ENCODE measurements at regions of chr4 and their contacts with region 1.

Region 1: DNA sequence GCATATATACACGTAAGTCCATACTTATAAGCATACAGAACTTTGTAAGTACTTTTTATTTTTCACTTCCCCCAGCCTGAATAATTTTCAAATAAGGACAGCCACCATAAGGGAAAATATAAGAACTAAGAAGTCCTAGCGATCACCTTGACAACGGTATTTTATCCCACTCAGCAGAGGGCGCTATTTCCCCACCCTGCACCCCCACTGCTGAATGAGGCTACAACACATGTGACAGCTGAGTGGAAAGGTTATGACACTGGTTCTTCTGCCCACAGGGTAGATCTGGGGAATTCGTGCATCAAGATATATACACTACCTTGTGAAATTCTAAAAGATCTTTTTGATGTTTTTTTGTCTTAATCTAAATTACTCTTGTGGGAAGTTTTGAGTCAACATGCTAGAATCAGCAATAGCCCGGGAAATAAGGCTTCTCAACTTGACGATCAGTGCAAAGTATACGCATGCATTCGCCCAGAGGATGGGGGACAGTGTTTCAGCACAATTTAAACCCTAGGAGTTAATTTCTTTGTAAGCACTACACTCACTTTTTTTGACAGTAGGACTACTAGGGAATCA is 151.5 kb downstream of the CORIN start:
- DNase-seq: peak; percentile 19 to 82
- H3K4me3 ChIP-seq: no peak overlapping the region
- H3K27ac ChIP-seq: no peak overlapping the region
- H3K4me1 ChIP-seq: no peaks in the 10 kb centered on the region
- H3K27me3 ChIP-seq: no peaks in the 10 kb centered on the region
- CTCF ChIP-seq: peak; percentile 83 to 84 (median 84)
- EP300 ChIP-seq: no peak
- POLR2A ChIP-seq: no peak
- RAD21 ChIP-seq: peak; percentile 84 to 87

Region 2: GRCh38 chr4:47668810-47669408 is 17.5 kb before region 1 on chr4:
- CTCF ChIA-PET with region 1: interaction called, 15 read pairs
- POLR2A ChIA-PET with region 1: no interaction called
- DNase-seq: no peak
- H3K4me3 ChIP-seq: no peak overlapping the region
- H3K27ac ChIP-seq: no peak overlapping the region
- H3K4me1 ChIP-seq: no peaks in the 10 kb centered on the region
- H3K27me3 ChIP-seq: no peaks in the 10 kb centered on the region
- CTCF ChIP-seq: peak in 2 of 3 experiments; percentile 40 to 48; a peak in 3 of 4 replicates
- EP300 ChIP-seq: no peak
- POLR2A ChIP-seq: no peak
- RAD21 ChIP-seq: peak; percentile 53 to 63